A549 (cell line): ENCODE measurements at regions of chr17 and their contacts with region 1.

Region 1: DNA sequence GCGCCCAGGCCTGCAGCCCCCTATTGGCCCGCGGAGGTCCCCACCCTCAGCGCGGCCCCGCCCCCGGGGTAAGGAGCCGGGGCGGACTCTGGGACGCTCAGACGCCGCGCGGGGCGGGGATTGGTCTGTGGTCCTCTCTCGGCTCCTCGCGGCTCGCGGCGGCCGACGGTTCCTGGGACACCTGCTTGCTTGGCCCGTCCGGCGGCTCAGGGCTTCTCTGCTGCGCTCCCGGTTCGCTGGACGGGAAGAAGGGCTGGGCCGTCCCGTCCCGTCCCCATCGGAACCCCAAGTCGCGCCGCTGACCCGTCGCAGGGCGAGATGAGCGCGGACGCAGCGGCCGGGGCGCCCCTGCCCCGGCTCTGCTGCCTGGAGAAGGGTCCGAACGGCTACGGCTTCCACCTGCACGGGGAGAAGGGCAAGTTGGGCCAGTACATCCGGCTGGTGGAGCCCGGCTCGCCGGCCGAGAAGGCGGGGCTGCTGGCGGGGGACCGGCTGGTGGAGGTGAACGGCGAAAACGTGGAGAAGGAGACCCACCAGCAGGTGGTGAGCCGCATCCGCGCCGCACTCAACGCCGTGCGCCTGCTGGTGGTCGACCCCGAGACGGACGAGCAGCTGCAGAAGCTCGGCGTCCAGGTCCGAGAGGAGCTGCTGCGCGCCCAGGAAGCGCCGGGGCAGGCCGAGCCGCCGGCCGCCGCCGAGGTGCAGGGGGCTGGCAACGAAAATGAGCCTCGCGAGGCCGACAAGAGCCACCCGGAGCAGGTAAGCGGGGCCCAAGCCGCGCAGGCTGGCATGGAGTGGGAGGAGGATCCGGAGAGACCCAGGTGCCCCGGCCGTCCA is at the start of gene NHERF1:
- DNase-seq: peak; percentile 59 to 90
- ATAC-seq: peak; percentile 86 to 96
- H3K4me3 ChIP-seq: peak within 1 kb of the TSS; percentile 76
- H3K27ac ChIP-seq: peak within 1 kb of the TSS; percentile 71 to 88
- H3K4me1 ChIP-seq: peaks cover 30% of the 10 kb centered on the region
- CTCF ChIP-seq: no peak; the same call in 2 of the 3 replicates
- EP300 ChIP-seq: no peak
- POLR2A ChIP-seq: peak; percentile 99
- RAD21 ChIP-seq: peak in 1 of 2 experiments; percentile 36; a peak in 1 of 5 replicates
- polyA plus RNA-seq, gene NHERF1: 50.2 and 51.5 TPM in 2 replicates

Region 2: DNA sequence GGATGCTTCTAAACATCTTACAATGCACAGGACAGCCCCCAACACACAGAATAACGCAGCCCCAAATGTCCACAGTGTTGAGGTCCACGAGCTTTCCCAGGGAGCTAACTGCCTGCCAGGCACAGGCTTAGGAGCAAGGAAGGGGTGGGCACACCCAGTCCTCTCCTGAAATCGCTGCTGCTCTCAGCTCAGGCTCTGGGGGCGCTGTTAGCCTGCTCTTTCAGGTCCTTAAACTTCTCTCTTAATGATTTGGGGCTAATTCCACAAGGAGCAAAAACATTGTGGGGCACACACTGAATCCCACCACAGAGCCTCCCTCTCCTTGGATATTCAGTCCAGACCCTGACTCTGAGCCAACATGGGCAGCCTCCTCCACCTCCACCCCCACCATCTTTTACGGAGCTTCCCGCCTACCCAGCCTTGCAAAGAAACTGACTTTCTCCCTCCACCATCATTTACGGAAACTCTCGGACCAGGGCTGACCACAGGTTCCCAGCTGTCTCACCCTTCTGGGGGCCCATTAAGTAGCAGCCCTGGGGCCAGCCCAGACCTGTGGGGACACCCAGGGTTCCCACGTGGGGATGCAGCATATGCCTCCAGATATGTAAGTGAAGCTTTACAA is 182.5 kb before region 1 on chr17:
- CTCF ChIA-PET with region 1: interaction called, 10 read pairs
- POLR2A ChIA-PET with region 1: no interaction called
- DNase-seq: peak; percentile 51 to 66
- ATAC-seq: peak in 1 of 2 experiments; percentile 67; a peak in 3 of 6 replicates
- H3K4me3 ChIP-seq: no peak overlapping the region
- H3K27ac ChIP-seq: peak overlapping the region in 1 of 2 experiments; percentile 41; a peak in 1 of 6 replicates
- H3K4me1 ChIP-seq: peaks cover 27% of the 10 kb centered on the region
- CTCF ChIP-seq: peak; percentile 68
- EP300 ChIP-seq: no peak
- POLR2A ChIP-seq: no peak
- RAD21 ChIP-seq: peak; percentile 64 to 75

Region 3: DNA sequence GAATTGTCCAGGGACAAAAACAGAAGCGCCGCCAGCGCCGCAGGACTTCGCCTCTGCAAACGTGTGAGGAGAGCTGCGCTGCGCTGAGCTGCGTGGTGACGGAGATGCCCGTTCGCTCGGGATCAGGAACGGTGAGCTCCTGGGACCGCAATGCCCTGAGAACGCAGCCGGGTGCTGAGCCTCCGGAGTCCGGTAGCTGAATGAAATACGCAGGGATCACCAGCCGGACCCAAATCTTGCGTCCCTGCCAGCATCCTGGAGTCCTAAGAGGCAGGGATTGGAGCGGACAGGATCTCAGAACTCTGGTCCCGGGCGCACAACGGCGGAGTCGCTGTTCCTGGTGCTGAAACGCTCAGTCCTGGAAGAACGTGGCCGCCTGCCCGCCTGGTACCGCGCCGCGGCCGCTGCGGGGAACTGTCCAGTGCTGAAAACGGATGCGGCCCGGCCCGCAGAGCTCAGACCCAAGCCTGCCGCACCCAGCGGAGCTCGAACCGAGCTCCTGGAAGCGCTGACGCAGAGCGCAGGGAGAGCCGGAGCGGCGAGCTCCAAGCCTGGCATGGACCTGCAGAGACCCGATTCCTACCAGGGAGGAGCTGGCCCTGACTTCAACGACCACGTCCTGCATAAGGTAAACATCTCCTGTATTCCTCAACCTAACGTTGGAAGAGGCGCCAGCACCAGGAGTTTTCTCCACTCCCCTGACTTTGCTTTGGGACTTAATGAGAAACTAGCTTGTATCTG is 77.5 kb before region 1 on chr17:
- CTCF ChIA-PET with region 1: interaction called, 18 read pairs
- POLR2A ChIA-PET with region 1: no interaction called
- DNase-seq: peak; percentile 71 to 80
- ATAC-seq: peak; percentile 88 to 98
- H3K4me3 ChIP-seq: no peak overlapping the region
- H3K27ac ChIP-seq: no peak overlapping the region
- H3K4me1 ChIP-seq: no peaks in the 10 kb centered on the region
- CTCF ChIP-seq: no peak
- EP300 ChIP-seq: no peak
- POLR2A ChIP-seq: no peak
- RAD21 ChIP-seq: no peak

Region 4: DNA sequence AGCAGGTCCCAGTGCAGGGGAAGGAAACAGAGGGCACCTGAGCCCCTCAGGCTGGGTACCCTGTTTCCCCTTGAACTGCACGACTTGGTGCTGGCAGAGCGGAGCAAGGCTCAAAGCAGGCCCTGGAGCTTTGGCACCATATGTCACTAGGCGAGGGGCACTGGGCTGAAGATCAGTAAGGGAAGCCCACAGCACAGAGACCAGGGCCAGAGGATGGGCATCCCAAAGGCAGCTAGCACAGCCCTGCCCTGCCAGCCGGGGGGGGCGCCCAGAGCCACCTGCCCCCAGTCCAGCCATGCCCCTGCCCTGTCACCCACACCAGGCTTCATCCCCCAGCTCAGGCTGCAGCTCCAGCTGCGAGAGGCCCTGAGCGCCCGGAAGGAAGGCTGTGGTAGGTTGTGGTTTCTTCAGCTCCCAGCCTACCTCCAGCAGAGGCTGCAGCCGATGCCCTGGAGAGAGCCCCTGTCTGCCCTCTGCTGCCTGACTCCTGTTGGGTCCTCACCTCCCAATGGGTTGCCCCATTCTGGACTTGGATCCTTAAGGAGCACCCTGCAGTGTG is 10.6 kb after region 1 on chr17:
- CTCF ChIA-PET with region 1: interaction called, 705 read pairs
- POLR2A ChIA-PET with region 1: interaction called, 12 read pairs
- DNase-seq: no peak
- ATAC-seq: peak; percentile 6 to 38; a peak in 3 of 6 replicates
- H3K4me3 ChIP-seq: no peak overlapping the region
- H3K27ac ChIP-seq: peak overlapping the region; percentile 57 to 79
- H3K4me1 ChIP-seq: peaks cover 69% of the 10 kb centered on the region
- CTCF ChIP-seq: no peak
- EP300 ChIP-seq: no peak
- POLR2A ChIP-seq: no peak
- RAD21 ChIP-seq: no peak

Region 5: GRCh38 chr17:74776044-74776977 is 27.6 kb after region 1 on chr17 and contains the start of gene NAT9:
- CTCF ChIA-PET with region 1: interaction called, 705 read pairs
- POLR2A ChIA-PET with region 1: interaction called, 15 read pairs
- DNase-seq: peak; percentile 97 to 99
- ATAC-seq: peak; percentile 84 to 92
- H3K4me3 ChIP-seq: peak within 1 kb of the TSS; percentile 69
- H3K27ac ChIP-seq: peak within 1 kb of the TSS; percentile 89 to 92
- H3K4me1 ChIP-seq: peaks cover 31% of the 10 kb centered on the region
- CTCF ChIP-seq: no peak
- EP300 ChIP-seq: no peak
- POLR2A ChIP-seq: peak; percentile 91
- RAD21 ChIP-seq: no peak
- polyA plus RNA-seq, gene NAT9: 42.9 and 43.4 TPM in 2 replicates

Region 6: DNA sequence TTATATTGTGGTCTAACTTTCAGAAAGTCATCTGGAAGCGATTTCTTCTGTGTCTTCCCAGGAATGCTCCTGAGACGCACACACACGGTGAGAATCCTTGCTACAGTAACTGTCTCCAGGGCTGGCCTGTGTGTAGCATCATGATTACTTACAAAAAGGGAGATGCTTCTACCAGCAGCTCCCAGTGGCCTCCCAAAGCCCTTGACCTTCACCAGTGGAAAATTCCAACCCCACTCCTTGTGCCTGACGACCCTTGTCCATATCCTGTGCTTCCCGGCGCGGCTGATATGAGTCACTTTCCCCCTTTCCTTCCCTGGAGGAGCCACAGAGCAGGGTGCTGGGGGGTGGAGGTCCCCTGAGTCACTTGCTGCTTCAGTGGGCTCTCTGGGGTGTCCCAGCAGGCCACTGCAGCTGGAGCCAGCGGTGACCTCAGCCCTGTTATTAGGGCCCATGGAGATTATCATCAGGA is 49.5 kb after region 1 on chr17:
- CTCF ChIA-PET with region 1: interaction called, 11 read pairs
- POLR2A ChIA-PET with region 1: no interaction called
- DNase-seq: no peak
- ATAC-seq: no peak
- H3K4me3 ChIP-seq: no peak overlapping the region
- H3K27ac ChIP-seq: no peak overlapping the region
- H3K4me1 ChIP-seq: no peaks in the 10 kb centered on the region
- CTCF ChIP-seq: no peak
- EP300 ChIP-seq: no peak
- POLR2A ChIP-seq: no peak
- RAD21 ChIP-seq: no peak